ENCODE measurements at regions of chr17 and their contacts with region 1.

Region 1: GRCh38 chr17:36072431-36073121 is 8.5 kb downstream of the CCL18 start:
- DNase-seq: peak; percentile 45 to 59
- ATAC-seq: peak in 5 of 8 donors; percentile 31 to 64 (median 56)
- H3K4me3 ChIP-seq: no peak overlapping the region
- H3K27ac ChIP-seq: peak overlapping the region in 1 of 10 donors; percentile 42
- H3K4me1 ChIP-seq: peaks cover 0 to 13% (median 0%) of the 10 kb centered on the region in 9 donors
- H3K27me3 ChIP-seq: peaks cover 0 to 8% (median 0%) of the 10 kb centered on the region in 7 donors
- CTCF ChIP-seq: peak; percentile 27 to 80 (median 63)

Region 2: DNA sequence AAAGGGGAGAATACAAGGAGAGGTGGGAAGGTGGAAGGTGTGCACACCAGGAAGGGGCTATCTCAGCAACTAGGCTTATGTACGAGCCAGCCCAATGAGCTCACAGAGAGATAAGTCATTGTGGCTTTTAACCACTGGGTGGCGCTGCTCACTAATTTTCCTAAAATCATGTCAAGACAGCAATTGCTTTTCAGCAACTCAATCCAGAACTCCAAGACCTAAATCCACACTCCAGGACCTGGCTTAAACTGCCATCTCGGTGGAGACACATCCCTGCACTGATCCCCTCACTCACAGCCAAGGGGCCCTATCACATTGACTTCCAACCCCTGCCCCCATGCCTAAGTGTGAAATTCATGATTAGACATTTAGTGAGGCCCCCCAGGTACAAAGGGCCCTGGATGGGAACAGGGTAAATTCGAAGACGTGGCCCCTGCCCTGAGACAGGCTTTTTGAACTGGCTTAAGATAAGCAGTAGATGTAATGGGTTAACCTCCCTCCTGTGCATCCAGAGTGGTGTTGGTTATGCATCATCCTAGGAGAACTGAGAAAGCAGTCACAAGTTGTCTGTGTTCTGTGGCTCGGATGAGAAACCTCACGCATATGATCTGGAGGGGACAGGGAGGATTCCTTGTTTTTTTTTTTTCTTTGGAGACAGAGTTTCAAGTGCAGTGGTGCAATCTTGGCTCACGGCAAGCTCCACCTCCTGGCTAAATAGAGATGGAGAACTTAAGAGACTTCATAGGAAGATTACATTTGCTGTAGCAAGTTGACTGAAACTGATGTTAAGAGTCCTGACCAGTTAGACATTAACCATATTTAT is 102.8 kb before region 1 on chr17:
- intact Hi-C with region 1: loop called in 8 of 10 experiments (anchors 2 to 10 kb)
- DNase-seq: peak; percentile 29 to 79
- ATAC-seq: peak; percentile 59 to 78 (median 74)
- H3K4me3 ChIP-seq: no peak overlapping the region
- H3K27ac ChIP-seq: no peak overlapping the region
- H3K4me1 ChIP-seq: peaks cover 0 to 28% (median 14%) of the 10 kb centered on the region in 9 donors
- H3K27me3 ChIP-seq: no peaks in the 10 kb centered on the region
- CTCF ChIP-seq: peak; percentile 77 to 90 (median 86)